PC-3 (cell line): ENCODE measurements at regions of chr17 and their contacts with region 1.

Region 1: DNA sequence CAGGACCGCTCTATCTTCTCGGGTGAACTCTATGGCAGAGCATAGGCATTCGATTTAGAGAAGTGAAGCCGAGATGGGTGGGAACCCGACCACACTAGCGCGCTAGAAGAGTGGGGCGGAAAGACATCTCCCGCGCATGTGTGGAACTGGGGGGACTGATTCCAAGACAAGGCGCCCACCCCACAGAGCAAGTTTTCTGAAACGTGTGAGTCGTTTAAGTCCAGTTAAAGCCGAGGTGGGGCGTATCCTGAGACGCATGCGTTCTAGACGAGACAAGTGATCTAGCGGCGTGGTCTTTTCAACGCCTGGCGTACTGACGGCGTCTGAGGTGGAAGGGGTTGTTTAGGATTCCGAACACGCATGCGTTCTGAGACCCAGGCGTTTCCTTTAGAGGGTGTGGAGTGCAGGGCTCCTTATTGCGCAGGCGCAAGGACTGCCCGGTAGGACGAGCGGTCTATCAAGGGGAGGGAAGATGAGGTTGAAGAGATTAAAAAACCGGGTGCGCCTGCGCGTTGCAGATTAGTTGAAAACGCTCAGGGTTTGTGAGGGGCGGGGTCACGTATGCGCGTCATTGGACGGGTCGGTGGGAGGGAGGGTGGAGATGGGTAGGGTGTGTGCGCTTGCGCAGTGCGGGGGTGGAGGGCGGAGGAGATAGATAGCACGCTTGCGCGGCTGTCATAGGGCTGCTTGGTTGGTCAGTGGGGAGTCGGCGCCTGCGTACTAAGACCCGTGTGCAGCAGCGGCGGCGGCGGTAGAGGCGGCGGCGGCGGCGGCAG is at the start of gene EIF5A:
- DNase-seq: peak; percentile 99
- ATAC-seq: peak; percentile 75
- H3K4me3 ChIP-seq: peak within 1 kb of the TSS; percentile 85
- H3K27ac ChIP-seq: peak within 1 kb of the TSS; percentile 97
- H3K4me1 ChIP-seq: peaks cover 23% of the 10 kb centered on the region; the same call in 1 of the 2 replicates
- H3K27me3 ChIP-seq: no peaks in the 10 kb centered on the region
- CTCF ChIP-seq: no peak
- total RNA-seq, gene EIF5A: 1,140 and 1,203 TPM in 2 replicates

Region 2: GRCh38 chr17:7239091-7240027 is 67.7 kb before region 1 on chr17 and contains the start of gene PHF23:
- CTCF ChIA-PET with region 1: no interaction called
- POLR2A ChIA-PET with region 1: no interaction called
- intact Hi-C with region 1: loop called (anchors 5 kb)
- DNase-seq: peak; percentile 98
- ATAC-seq: peak; percentile 52
- H3K4me3 ChIP-seq: peak within 1 kb of the TSS; percentile 96
- H3K27ac ChIP-seq: peak within 1 kb of the TSS; percentile 32; the same call in 1 of the 2 replicates
- H3K4me1 ChIP-seq: peaks cover 40% of the 10 kb centered on the region
- H3K27me3 ChIP-seq: no peaks in the 10 kb centered on the region
- CTCF ChIP-seq: no peak
- total RNA-seq, gene PHF23: 20.8 and 32.7 TPM in 2 replicates

Region 3: DNA sequence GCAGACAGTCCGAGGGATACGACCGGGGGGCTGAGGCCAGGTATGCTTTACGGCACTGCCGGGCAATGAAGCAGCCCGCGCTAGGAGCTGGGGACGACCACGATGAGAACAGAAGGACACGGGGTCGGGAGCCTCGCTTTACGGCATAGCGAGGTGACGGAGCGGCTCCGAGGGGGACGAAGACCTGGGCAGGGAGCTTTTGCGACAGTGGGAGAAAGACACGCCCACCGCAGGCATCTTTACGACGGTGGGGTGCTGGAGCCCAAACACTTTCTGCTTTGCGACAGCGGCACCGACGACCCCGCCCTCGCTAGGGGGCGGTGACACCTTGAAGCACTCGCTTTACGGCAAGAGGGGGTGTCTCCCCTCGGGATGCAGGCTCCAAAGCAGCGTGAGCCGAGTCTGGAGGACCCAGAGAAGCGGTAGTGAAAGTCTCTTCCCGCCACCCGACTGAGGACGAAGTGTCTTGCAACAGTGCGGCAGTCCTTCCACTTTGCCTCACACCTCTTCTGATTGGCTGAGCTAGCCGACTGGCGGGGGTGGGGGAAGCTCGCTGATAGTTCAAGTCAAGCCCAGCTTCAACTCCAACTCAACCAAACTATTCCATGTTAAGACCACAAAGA is 22.4 kb after region 1 on chr17:
- CTCF ChIA-PET with region 1: no interaction called
- POLR2A ChIA-PET with region 1: no interaction called
- intact Hi-C with region 1: loop called (anchors 2 kb)
- DNase-seq: peak; percentile 95
- ATAC-seq: peak; percentile 71
- H3K4me3 ChIP-seq: peak overlapping the region; percentile 96
- H3K27ac ChIP-seq: peak overlapping the region; percentile 77
- H3K4me1 ChIP-seq: 0 out of 2 replicates have a peak, but pooled peaks cover 6% of the 10 kb centered on the region
- H3K27me3 ChIP-seq: no peaks in the 10 kb centered on the region
- CTCF ChIP-seq: no peak